Aorta (tissue), 5 donors: ENCODE measurements at regions of chr17 and their contacts with region 1.

Region 1: GRCh38 chr17:8300627-8301242 is 5.5 kb upstream of the SLC25A35 start:
- DNase-seq: peak in 1 of 2 donors; percentile 68
- ATAC-seq: peak; percentile 93
- H3K4me3 ChIP-seq: no peak overlapping the region
- H3K27ac ChIP-seq: no peak overlapping the region
- H3K4me1 ChIP-seq: no peaks in the 10 kb centered on the region
- H3K27me3 ChIP-seq: no peaks in the 10 kb centered on the region

Region 2: GRCh38 chr17:8079291-8080207 is 221.2 kb before region 1 on chr17:
- intact Hi-C with region 1: loop called in 1 of 2 experiments (anchors 10 kb)
- DNase-seq: peak; percentile 76 to 93
- ATAC-seq: peak; percentile 92
- H3K4me3 ChIP-seq: peak overlapping the region in 1 of 2 donors; percentile 11
- H3K27ac ChIP-seq: no peak overlapping the region
- H3K4me1 ChIP-seq: no peaks in the 10 kb centered on the region
- H3K27me3 ChIP-seq: no peaks in the 10 kb centered on the region

Region 3: DNA sequence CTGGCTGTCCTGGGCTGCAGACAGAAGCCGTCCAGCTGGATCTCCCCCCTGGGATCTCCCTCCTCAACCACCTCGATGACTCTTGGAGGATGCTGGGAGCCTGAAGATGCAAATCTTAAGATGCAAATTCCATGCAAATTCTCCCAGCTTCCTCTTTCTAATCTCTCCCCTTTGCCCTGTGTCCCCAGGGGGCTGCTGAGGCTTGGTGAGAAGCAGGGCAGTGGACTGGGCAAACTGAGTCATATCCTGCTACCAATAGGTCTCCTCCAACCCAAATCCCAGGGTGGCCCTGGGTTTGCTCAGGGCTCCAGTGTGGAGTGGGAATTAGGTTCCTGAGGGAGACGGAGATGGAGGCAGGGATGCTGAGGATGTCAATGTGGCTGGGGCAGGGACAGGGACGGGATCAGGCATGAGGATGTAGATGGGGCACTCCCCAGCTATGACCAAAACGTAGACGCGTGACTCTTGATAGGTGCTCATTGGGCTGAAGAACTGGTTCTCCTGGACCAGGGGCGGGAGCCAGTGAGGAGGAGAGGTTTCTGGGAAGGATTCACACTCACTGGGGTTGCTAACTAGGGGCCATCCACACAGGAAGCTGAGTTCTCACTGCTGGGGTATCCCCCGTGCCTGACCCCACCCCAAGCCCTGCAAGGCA is 209.6 kb before region 1 on chr17:
- intact Hi-C with region 1: loop called in 1 of 2 experiments (anchors 10 kb)
- DNase-seq: no peak
- ATAC-seq: no peak
- H3K4me3 ChIP-seq: no peak overlapping the region
- H3K27ac ChIP-seq: no peak overlapping the region
- H3K4me1 ChIP-seq: no peaks in the 10 kb centered on the region
- H3K27me3 ChIP-seq: peaks cover 0 to 2% of the 10 kb centered on the region in 2 donors

Region 4: GRCh38 chr17:8320990-8321389 is 20.3 kb after region 1 on chr17:
- intact Hi-C with region 1: no loop called
- DNase-seq: no peak
- ATAC-seq: no peak
- H3K4me3 ChIP-seq: no peak overlapping the region
- H3K27ac ChIP-seq: no peak overlapping the region
- H3K4me1 ChIP-seq: no peaks in the 10 kb centered on the region
- H3K27me3 ChIP-seq: no peaks in the 10 kb centered on the region